Activated CD4-positive, alpha-beta T cell treated with anti-CD3 and anti-CD28 coated beads for 36 hours (primary cell): ENCODE measurements at regions of chr17 and their contacts with region 1.

Region 1: GRCh38 chr17:67824735-67825626 is at the start of gene BPTF:
- DNase-seq: peak; percentile 95
- ATAC-seq: peak; percentile 88
- H3K4me3 Mint-ChIP-seq: peak within 1 kb of the TSS; percentile 99
- H3K27ac Mint-ChIP-seq: peak within 1 kb of the TSS; percentile 98
- H3K4me1 Mint-ChIP-seq: peaks cover 26% of the 10 kb centered on the region
- H3K27me3 Mint-ChIP-seq: peaks cover 5% of the 10 kb centered on the region
- total RNA-seq, gene BPTF: 77.6 to 109 TPM

Region 2: GRCh38 chr17:67366193-67367157 is 458.5 kb before region 1 on chr17 and contains the start of gene PSMD12:
- CTCF ChIA-PET with region 1: no interaction called
- POLR2A ChIA-PET with region 1: no interaction called
- intact Hi-C with region 1: loop called (anchors 2 to 5 kb)
- DNase-seq: peak; percentile 96
- ATAC-seq: peak; percentile 78
- H3K4me3 Mint-ChIP-seq: peak within 1 kb of the TSS; percentile 94
- H3K27ac Mint-ChIP-seq: peak within 1 kb of the TSS; percentile 96
- H3K4me1 Mint-ChIP-seq: peaks cover 43% of the 10 kb centered on the region
- H3K27me3 Mint-ChIP-seq: no peaks in the 10 kb centered on the region
- total RNA-seq, gene PSMD12: 100 to 101 TPM

Region 3: DNA sequence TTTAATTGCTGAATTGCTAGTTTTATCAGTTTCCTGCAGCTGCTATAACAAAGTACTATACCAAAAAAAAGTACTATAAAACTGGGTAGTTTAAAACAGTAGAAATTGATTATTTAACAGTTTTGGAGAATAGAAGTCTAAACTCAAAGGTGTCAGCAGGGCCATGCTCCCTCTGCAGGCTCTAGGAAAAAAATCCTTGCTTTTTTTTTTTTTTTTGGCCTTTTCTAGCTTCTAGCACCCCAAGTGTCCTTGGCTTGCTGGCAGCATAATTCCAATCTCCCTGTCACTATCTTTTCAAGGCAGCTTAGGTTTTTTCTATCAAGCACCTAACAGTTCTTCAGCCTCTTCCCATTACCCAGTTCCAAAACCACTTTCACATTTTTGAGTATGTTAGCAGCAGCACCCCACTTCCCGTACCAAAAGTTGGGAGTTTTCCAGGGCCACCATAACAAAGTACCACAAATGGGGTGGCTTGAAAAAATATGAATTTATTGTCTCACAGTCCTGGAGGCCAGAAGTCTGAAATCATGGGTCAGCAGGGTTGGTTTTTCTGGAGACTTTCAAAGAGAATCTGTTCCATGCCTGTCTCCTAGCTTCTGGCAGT is 37.7 kb after region 1 on chr17:
- CTCF ChIA-PET with region 1: interaction called, 3 read pairs
- POLR2A ChIA-PET with region 1: no interaction called
- intact Hi-C with region 1: loop called in 1 of 2 experiments (anchors 5 kb)
- DNase-seq: no peak
- ATAC-seq: no peak
- H3K4me3 Mint-ChIP-seq: no peak overlapping the region
- H3K27ac Mint-ChIP-seq: peak overlapping the region; percentile 76
- H3K4me1 Mint-ChIP-seq: peaks cover 50% of the 10 kb centered on the region
- H3K27me3 Mint-ChIP-seq: no peaks in the 10 kb centered on the region

Region 4: DNA sequence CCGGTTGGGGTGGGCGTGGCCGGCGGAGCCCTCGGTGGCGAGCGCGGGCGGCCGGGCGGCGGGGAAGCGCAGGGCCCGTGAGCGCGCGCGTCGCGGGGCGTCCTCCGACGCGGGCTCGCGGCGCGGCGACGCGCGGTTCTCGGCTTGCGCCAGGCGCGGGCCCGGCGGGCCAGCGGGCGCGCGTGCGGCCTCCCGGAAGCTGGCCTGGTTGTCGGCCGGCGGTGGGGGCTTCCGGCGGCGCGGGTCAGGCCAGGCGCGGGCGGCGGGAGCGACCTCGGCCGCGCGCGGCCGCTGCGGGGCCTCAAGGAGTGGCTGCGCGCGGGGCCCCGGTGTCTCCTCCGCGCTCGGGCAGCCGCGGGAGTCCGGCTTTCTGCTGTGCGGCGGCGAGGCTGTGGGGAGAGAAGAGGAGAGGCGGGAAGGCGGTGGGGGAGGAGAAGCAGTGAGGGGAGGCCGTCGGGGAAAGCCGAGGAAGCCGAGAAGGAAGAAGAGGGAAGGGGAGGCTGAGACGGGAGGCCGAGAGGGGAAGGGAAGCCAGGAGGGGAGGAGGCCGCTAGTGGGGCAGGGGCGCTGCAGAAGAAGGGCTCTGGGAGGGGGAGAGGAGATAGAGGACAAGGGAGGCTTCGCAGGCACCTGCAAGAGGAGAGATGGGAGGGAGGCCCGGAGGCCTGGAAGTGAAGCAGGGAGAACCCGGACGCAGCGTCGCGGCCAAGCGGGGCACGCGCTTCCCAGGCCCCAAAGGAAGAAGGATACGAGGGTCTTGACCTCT is 168.8 kb after region 1 on chr17:
- CTCF ChIA-PET with region 1: no interaction called
- POLR2A ChIA-PET with region 1: no interaction called
- intact Hi-C with region 1: loop called in 1 of 2 experiments (anchors 1 kb)
- DNase-seq: peak; percentile 84
- ATAC-seq: peak; percentile 57
- H3K4me3 Mint-ChIP-seq: peak overlapping the region; percentile 75
- H3K27ac Mint-ChIP-seq: peak overlapping the region; percentile 84
- H3K4me1 Mint-ChIP-seq: peaks cover 26% of the 10 kb centered on the region
- H3K27me3 Mint-ChIP-seq: peaks cover 13% of the 10 kb centered on the region

Region 5: DNA sequence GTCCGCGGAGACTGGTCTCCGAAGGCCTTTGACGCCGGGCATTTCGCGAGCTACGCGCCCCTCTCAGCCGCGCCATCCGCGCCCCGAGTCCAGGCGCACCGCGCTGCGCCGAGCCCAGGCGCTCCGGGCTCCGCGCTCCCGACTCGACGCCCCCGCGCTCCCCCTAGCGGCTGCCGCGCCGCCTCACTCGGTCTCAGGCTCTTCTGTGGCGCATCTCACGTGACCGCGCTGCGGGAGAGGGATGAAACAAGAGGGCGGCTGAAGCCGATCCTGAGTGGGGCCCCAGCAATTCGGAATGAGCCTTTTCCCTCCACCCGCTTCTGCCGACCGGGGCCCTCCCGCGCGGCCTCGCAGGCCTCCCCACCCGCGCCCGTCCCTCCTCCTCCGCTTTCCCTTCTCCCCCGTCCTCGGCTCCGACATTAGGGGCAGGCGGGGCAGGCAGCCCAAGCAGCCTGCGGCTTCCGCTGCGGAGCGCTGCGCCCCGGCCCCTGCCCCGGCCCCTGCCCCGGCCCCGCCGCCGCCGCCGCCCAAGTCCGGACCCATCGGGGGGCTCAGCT is 380.3 kb after region 1 on chr17:
- CTCF ChIA-PET with region 1: no interaction called
- POLR2A ChIA-PET with region 1: no interaction called
- intact Hi-C with region 1: loop called in 1 of 2 experiments (anchors 10 kb)
- DNase-seq: peak; percentile 96
- ATAC-seq: peak; percentile 87
- H3K4me3 Mint-ChIP-seq: peak overlapping the region; percentile 93
- H3K27ac Mint-ChIP-seq: peak overlapping the region; percentile 78
- H3K4me1 Mint-ChIP-seq: peaks cover 27% of the 10 kb centered on the region
- H3K27me3 Mint-ChIP-seq: peaks cover 7% of the 10 kb centered on the region

Region 6: DNA sequence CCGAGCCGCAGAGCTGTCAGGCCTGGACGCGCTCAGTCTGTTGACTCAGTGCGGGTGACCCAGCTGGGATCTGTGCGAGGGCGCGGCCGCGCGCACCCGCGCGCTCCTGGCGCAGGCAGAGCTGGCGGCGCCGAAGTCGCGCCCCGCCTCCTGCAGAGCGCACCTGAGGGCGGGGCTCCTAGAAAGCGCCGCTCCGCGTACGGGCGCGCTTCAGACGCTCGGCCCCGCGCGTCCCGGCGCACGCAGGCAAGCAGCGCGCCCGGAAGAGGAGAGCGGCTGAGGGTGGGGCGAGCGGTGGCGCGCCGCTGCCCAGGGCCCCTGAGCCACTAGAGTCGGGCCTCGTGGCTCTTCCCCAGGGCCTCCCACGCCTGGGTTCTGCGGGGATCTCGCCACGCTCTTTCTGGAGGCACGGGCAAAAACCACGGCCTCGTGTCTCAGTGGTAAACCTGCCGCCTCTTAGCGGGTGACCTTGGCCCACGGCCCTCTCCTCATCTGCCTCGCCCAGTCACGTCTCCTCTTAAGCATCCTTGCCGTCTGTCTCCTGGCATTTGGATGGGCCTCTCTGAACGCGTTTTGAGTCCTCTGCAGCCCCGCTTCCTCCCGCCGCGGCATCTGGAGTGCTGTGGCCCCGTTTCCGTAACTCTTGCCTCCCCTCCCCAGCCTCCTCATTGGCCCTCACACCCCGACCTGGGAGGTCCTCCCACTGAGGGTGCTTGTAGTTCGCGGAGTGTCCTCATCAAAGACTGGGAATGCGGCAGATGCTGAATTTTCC is 1502.3 kb after region 1 on chr17 and contains the start of gene ABCA5:
- CTCF ChIA-PET with region 1: no interaction called
- POLR2A ChIA-PET with region 1: no interaction called
- intact Hi-C with region 1: loop called in 1 of 2 experiments (anchors 10 kb)
- DNase-seq: peak; percentile 92
- ATAC-seq: peak; percentile 98
- H3K4me3 Mint-ChIP-seq: peak within 1 kb of the TSS; percentile 95
- H3K27ac Mint-ChIP-seq: peak within 1 kb of the TSS; percentile 97
- H3K4me1 Mint-ChIP-seq: peaks cover 43% of the 10 kb centered on the region
- H3K27me3 Mint-ChIP-seq: peaks cover 2% of the 10 kb centered on the region
- total RNA-seq, gene ABCA5: 14.4 to 15.1 TPM